H1 (cell line): ENCODE measurements at regions of chr17 and their contacts with region 1.

Region 1: GRCh38 chr17:2874189-2874686 is 78.0 kb downstream of the RAP1GAP2 start:
- DNase-seq: peak in 1 of 2 experiments; percentile 87
- H3K4me3 ChIP-seq: peak overlapping the region in 2 of 4 experiments; percentile 7 to 31; a peak in 3 of 8 replicates
- H3K27ac ChIP-seq: peak overlapping the region; percentile 89
- H3K4me1 ChIP-seq: peaks cover 15 to 41% (median 29%) of the 10 kb centered on the region in 4 experiments
- H3K27me3 ChIP-seq: no peaks in the 10 kb centered on the region
- CTCF ChIP-seq: no peak
- EP300 ChIP-seq: no peak
- POLR2A ChIP-seq: peak in 1 of 2 experiments; percentile 72; a peak in 2 of 3 replicates
- RAD21 ChIP-seq: no peak

Region 2: GRCh38 chr17:2814481-2815341 is 59.5 kb before region 1 on chr17:
- CTCF ChIA-PET with region 1: no interaction called
- POLR2A ChIA-PET with region 1: no interaction called
- DNase-seq: no peak
- H3K4me3 ChIP-seq: no peak overlapping the region
- H3K27ac ChIP-seq: no peak overlapping the region
- H3K4me1 ChIP-seq: peaks cover 0 to 13% (median 4%) of the 10 kb centered on the region in 4 experiments; a peak in 6 of 7 replicates
- H3K27me3 ChIP-seq: no peaks in the 10 kb centered on the region
- CTCF ChIP-seq: no peak
- EP300 ChIP-seq: no peak
- POLR2A ChIP-seq: no peak
- RAD21 ChIP-seq: no peak

Region 3: DNA sequence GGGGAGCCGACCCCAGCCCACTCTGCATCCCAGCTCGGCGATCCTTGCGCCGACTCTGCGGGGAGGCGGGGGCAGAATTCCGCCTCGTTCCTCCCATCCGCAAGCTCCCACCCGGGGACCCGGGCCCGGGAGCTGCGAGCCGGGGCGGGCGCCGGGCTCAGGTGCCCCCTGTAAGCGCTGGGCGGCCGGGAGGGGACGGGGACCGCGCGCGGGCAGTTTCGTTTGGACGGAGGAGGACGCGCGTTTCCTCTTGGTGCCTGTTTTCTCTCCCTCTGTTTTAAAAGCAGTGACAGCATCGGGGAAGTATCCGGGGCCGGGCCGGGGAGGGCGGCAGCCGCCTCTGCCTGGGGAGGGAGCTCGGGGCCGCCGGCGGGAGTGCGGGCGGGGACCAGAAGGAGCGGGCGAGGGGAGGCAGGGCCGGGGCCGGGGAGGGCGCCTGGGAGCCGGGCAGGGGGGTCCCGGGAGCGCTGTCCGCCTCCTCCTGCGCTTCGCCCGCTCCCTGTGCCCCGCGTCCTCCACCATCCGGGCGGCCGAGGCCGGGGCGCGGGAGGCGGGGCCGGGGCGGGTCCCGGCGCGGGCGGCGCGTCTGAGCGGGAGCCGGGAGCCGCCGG is 21.0 kb before region 1 on chr17:
- CTCF ChIA-PET with region 1: interaction called, 25 read pairs
- POLR2A ChIA-PET with region 1: interaction called, 14 read pairs
- DNase-seq: peak in 1 of 2 experiments; percentile 76
- H3K4me3 ChIP-seq: peak overlapping the region; percentile 51 to 90 (median 80)
- H3K27ac ChIP-seq: no peak overlapping the region
- H3K4me1 ChIP-seq: peaks cover 12 to 32% (median 22%) of the 10 kb centered on the region in 4 experiments
- H3K27me3 ChIP-seq: peaks cover 0 to 5% (median 2%) of the 10 kb centered on the region in 4 experiments; a peak in 2 of 7 replicates
- CTCF ChIP-seq: no peak
- EP300 ChIP-seq: no peak
- POLR2A ChIP-seq: no peak
- RAD21 ChIP-seq: no peak

Region 4: DNA sequence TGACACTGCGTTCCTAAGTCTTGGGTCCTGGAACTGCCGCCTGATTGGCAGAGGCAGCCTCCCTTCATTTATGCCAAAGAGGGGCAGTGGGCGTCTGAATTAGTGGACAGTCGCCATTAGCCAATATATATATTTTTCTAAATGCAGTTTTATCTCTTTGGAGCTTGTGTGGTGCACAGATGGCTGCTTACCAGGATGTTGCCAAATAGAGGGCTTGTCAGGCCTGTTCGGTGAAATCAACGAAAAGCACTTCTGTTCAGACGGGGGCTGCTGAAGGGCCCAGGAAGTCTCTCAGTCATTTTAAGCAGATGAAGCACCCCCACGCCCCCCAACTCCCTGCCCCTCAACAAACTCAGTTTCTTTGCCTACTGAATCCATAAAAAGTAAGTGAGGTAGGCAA is 12.0 kb before region 1 on chr17:
- CTCF ChIA-PET with region 1: interaction called, 23 read pairs
- POLR2A ChIA-PET with region 1: interaction called, 10 read pairs
- DNase-seq: no peak
- H3K4me3 ChIP-seq: no peak overlapping the region
- H3K27ac ChIP-seq: no peak overlapping the region
- H3K4me1 ChIP-seq: peaks cover 0 to 18% (median 6%) of the 10 kb centered on the region in 4 experiments
- H3K27me3 ChIP-seq: no peaks in the 10 kb centered on the region
- CTCF ChIP-seq: no peak
- EP300 ChIP-seq: no peak
- POLR2A ChIP-seq: no peak
- RAD21 ChIP-seq: no peak

Region 5: GRCh38 chr17:2892305-2892971 is 18.2 kb after region 1 on chr17:
- CTCF ChIA-PET with region 1: interaction called, 8 read pairs
- POLR2A ChIA-PET with region 1: interaction called, 17 read pairs
- DNase-seq: no peak
- H3K4me3 ChIP-seq: no peak overlapping the region
- H3K27ac ChIP-seq: no peak overlapping the region
- H3K4me1 ChIP-seq: peaks cover 0 to 3% (median 2%) of the 10 kb centered on the region in 4 experiments; a peak in 4 of 7 replicates
- H3K27me3 ChIP-seq: no peaks in the 10 kb centered on the region
- CTCF ChIP-seq: no peak
- EP300 ChIP-seq: no peak
- POLR2A ChIP-seq: no peak
- RAD21 ChIP-seq: no peak

Region 6: GRCh38 chr17:2909175-2909845 is 35.1 kb after region 1 on chr17:
- CTCF ChIA-PET with region 1: interaction called, 13 read pairs
- POLR2A ChIA-PET with region 1: interaction called, 3 read pairs
- DNase-seq: no peak
- H3K4me3 ChIP-seq: no peak overlapping the region
- H3K27ac ChIP-seq: no peak overlapping the region
- H3K4me1 ChIP-seq: peaks cover 0 to 6% (median under 1%) of the 10 kb centered on the region in 4 experiments; a peak in 3 of 7 replicates
- H3K27me3 ChIP-seq: no peaks in the 10 kb centered on the region
- CTCF ChIP-seq: no peak
- EP300 ChIP-seq: no peak
- POLR2A ChIP-seq: no peak
- RAD21 ChIP-seq: no peak